Activated CD4-positive, alpha-beta T cell treated with anti-CD3 and anti-CD28 coated beads for 36 hours (primary cell): ENCODE measurements at regions of chr2 and their contacts with region 1.

Region 1: GRCh38 chr2:71100195-71100964 is 29.6 kb downstream of the MCEE start:
- DNase-seq: peak; percentile 71
- ATAC-seq: peak; percentile 74
- H3K4me3 Mint-ChIP-seq: no peak overlapping the region
- H3K27ac Mint-ChIP-seq: no peak overlapping the region
- H3K4me1 Mint-ChIP-seq: no peaks in the 10 kb centered on the region
- H3K27me3 Mint-ChIP-seq: no peaks in the 10 kb centered on the region

Region 2: DNA sequence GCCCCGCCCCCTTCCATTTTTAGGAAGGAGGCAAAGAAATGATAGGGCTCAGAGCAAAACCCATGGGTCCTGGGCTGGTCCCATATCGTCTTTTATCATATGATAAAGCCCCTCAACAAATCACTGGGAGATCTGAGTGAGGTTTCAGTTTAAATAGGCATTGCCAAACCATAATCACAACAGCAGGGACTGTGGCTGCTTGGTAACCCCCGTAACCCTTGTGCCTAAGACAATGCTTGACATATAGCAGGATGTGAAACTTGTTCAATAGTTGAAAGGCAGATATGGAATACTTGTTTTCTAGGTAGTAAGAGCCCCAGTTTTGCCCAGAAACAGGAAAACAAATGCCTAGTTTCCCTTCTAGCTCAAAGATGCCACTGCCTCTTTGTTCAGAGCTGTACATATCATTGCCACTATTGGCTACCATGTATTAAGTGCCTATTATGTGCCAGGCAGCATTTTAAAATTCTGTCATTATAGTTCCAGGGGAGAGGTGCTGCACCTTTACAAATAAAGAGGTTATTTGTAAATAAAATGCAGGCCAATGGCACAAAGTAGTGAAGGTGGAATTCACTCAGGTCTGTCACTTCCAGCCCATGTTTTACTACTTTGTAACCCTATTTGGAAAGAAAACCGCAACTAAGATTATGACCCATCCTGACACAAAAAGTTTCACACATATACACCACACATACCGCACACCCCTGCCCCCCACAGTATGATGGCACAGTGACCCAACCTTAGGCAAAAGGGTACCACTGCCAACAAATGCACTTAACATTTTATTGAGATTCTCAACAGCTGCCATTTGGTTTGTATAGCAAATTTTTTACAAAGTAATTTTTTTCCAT is 17.8 kb before region 1 on chr2:
- CTCF ChIA-PET with region 1: interaction called, 15 read pairs
- POLR2A ChIA-PET with region 1: no interaction called
- intact Hi-C with region 1: no loop called
- DNase-seq: peak; percentile 85
- ATAC-seq: peak; percentile 90
- H3K4me3 Mint-ChIP-seq: no peak overlapping the region
- H3K27ac Mint-ChIP-seq: peak overlapping the region; percentile 34
- H3K4me1 Mint-ChIP-seq: peaks cover 19% of the 10 kb centered on the region
- H3K27me3 Mint-ChIP-seq: peaks cover 7% of the 10 kb centered on the region

Region 3: DNA sequence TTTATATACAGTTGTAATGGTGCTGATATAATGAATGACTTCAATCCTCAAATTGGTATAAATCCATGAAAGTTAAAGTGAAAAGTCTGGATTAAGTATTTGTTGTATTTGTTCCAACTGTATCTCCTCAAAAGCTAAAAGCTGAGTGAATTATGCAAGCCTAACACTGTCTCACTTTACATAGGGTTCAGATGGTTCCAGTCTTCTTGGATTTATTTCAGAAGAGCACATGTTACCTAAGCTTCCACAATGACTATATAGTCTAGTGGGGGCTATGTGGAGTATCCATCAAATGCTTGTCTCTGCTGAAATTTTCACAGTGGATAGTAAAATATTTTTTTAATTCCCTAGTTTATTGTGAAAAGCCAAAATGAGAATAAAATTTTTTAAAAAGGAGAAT is 16.7 kb after region 1 on chr2:
- CTCF ChIA-PET with region 1: interaction called, 27 read pairs
- POLR2A ChIA-PET with region 1: no interaction called
- intact Hi-C with region 1: no loop called
- DNase-seq: no peak
- ATAC-seq: no peak
- H3K4me3 Mint-ChIP-seq: no peak overlapping the region
- H3K27ac Mint-ChIP-seq: no peak overlapping the region
- H3K4me1 Mint-ChIP-seq: peaks cover 5% of the 10 kb centered on the region
- H3K27me3 Mint-ChIP-seq: no peaks in the 10 kb centered on the region